B cell (primary cell): ENCODE measurements at regions of chr10 and their contacts with region 1.

Region 1: DNA sequence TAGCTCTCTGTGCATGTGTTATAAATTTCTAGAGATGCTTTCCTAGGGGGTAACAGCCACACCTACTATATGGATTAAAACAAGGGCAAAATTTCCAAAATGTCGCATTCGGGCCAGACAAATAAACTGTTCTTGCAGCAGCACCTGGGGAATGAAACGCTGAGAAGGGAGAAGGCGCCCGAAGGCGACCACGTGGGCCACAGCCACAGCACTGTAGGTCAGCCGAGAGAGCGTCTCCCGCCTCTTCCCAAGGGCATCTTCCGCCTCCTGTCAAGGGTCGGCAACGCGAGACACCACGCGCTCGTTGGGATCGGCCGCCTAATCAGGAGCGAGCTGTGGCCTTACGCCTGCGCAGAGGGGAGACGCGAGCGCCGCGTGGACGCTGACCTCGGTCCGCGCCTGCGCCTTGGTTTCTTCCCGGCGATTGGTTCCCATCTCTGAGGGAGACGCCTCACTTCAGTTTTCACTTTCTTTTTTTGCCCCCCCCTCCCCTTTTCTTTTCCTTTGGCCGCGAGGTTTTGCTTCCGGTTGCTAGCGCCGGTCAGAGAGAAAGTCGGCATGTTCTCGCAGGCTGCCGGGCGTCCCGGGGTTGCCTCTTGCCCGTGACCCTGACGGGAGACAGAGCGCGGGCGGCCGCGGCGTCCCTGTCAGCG is at the start of gene TASOR2:
- DNase-seq: peak; percentile 95
- ATAC-seq: peak; percentile 83
- H3K4me3 ChIP-seq: peak within 1 kb of the TSS; percentile 31 to 87 (median 75)
- H3K4me3 Mint-ChIP-seq: peak within 1 kb of the TSS; percentile 98
- H3K27ac ChIP-seq: peak within 1 kb of the TSS; percentile 78 to 97
- H3K27ac Mint-ChIP-seq: peak within 1 kb of the TSS; percentile 95
- H3K4me1 ChIP-seq: peaks cover 27 to 33% of the 10 kb centered on the region in 2 donors
- H3K4me1 Mint-ChIP-seq: peaks cover 33% of the 10 kb centered on the region
- H3K27me3 ChIP-seq: no peaks in the 10 kb centered on the region
- H3K27me3 Mint-ChIP-seq: peaks cover 4% of the 10 kb centered on the region
- CTCF ChIP-seq: no peak
- total RNA-seq, gene TASOR2: 68.6 and 69.6 TPM in 2 replicates

Region 2: GRCh38 chr10:5648584-5649457 is 35.6 kb before region 1 on chr10:
- CTCF ChIA-PET with region 1: no interaction called
- POLR2A ChIA-PET with region 1: no interaction called
- intact Hi-C with region 1: no loop called
- DNase-seq: no peak
- ATAC-seq: no peak
- H3K4me3 ChIP-seq: no peak overlapping the region
- H3K4me3 Mint-ChIP-seq: no peak overlapping the region
- H3K27ac ChIP-seq: no peak overlapping the region
- H3K27ac Mint-ChIP-seq: no peak overlapping the region
- H3K4me1 ChIP-seq: peaks cover 21 to 23% of the 10 kb centered on the region in 2 donors
- H3K4me1 Mint-ChIP-seq: peaks cover 26% of the 10 kb centered on the region
- H3K27me3 ChIP-seq: no peaks in the 10 kb centered on the region
- H3K27me3 Mint-ChIP-seq: peaks cover 3% of the 10 kb centered on the region
- CTCF ChIP-seq: no peak

Region 3: GRCh38 chr10:5666830-5667630 is 17.4 kb before region 1 on chr10:
- CTCF ChIA-PET with region 1: no interaction called
- POLR2A ChIA-PET with region 1: no interaction called
- intact Hi-C with region 1: loop called (anchors 1 kb)
- DNase-seq: no peak
- ATAC-seq: no peak
- H3K4me3 ChIP-seq: peak overlapping the region; percentile 38 to 80 (median 68)
- H3K4me3 Mint-ChIP-seq: peak overlapping the region; percentile 96
- H3K27ac ChIP-seq: no peak overlapping the region
- H3K27ac Mint-ChIP-seq: no peak overlapping the region
- H3K4me1 ChIP-seq: peaks cover 14 to 15% of the 10 kb centered on the region in 2 donors
- H3K4me1 Mint-ChIP-seq: peaks cover 20% of the 10 kb centered on the region
- H3K27me3 ChIP-seq: no peaks in the 10 kb centered on the region
- H3K27me3 Mint-ChIP-seq: peaks cover 4% of the 10 kb centered on the region
- CTCF ChIP-seq: no peak

Region 4: DNA sequence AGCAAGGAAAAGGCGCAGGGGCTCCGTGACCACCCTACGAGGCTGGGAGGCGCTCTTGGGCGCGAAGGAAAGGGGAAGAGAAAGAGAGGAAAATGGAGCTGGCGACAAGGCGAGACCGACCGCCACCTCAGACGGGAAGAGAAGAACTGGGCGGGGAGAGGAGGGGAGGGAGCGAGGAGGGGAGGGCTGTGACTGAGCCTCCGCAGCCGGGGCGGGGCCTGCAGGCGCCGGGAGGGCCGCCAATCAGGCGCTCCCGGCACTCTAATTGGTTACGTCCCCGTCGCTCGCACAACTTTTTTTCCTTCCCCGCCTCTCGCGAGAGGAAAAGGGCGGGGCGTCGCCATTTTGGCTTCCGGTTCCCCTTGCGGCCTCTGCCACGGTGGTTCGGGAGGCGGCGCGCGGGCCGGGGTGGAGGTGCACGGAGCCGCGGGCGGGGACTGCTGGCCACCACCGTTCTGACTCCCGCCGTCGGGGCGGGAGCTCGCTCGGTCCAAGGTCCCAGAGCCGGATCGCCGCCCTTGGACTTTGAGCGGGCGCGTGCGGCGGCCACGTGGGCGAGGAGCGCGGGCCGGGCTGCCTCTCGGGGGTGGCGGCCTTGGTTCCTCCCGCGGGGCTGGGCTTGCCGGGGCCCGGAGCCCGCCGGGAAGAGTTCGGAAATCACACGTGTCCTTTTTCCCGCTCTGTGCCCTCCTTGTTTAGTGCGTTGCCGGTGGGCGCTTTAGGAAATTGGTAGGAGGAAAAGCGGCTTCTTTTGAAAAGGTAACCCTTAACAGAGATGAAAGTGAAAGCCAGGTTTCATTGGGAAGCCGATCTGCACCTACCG is 129.1 kb after region 1 on chr10 and contains the start of gene GDI2:
- CTCF ChIA-PET with region 1: no interaction called
- POLR2A ChIA-PET with region 1: interaction called, 4 read pairs
- intact Hi-C with region 1: loop called (anchors 2 kb)
- DNase-seq: peak; percentile 98
- ATAC-seq: peak; percentile 87
- H3K4me3 ChIP-seq: peak within 1 kb of the TSS; percentile 77 to 98 (median 93)
- H3K4me3 Mint-ChIP-seq: peak within 1 kb of the TSS; percentile 91
- H3K27ac ChIP-seq: peak within 1 kb of the TSS; percentile 89 to 94
- H3K27ac Mint-ChIP-seq: peak within 1 kb of the TSS; percentile 96
- H3K4me1 ChIP-seq: peaks cover 66 to 73% of the 10 kb centered on the region in 2 donors
- H3K4me1 Mint-ChIP-seq: peaks cover 73% of the 10 kb centered on the region
- H3K27me3 ChIP-seq: no peaks in the 10 kb centered on the region
- H3K27me3 Mint-ChIP-seq: no peaks in the 10 kb centered on the region
- CTCF ChIP-seq: no peak
- total RNA-seq, gene GDI2: 187 and 189 TPM in 2 replicates

Region 5: DNA sequence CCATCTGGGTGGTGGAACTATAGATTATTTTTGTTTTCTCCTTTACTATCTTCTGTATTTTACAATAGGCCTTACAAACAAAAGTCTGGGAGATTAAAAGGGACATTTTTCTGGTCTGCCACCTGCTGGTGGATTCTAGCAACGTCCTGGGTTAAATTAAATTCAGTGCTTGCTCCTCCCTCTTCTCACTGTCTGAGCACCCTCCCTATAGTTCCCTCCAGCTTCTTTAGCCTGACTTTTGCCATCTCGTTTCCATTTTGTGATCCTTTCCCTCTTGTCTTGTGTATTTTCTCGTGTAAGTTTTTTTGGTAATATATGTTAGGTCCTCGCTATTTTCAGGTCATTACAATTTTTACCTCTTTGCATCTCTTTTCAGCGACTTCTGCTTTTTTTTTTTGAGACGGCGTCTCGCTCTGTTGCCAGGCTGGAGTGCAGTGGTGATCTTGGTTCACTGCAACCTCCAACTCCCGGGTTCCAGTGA is 189.1 kb after region 1 on chr10:
- CTCF ChIA-PET with region 1: no interaction called
- POLR2A ChIA-PET with region 1: no interaction called
- intact Hi-C with region 1: loop called (anchors 1 kb)
- DNase-seq: peak; percentile 90
- ATAC-seq: peak; percentile 88
- H3K4me3 ChIP-seq: peak overlapping the region; percentile 18 to 52 (median 41)
- H3K4me3 Mint-ChIP-seq: peak overlapping the region; percentile 89
- H3K27ac ChIP-seq: peak overlapping the region; percentile 70 to 76
- H3K27ac Mint-ChIP-seq: peak overlapping the region; percentile 93
- H3K4me1 ChIP-seq: peaks cover 12 to 19% of the 10 kb centered on the region in 2 donors
- H3K4me1 Mint-ChIP-seq: peaks cover 20% of the 10 kb centered on the region
- H3K27me3 ChIP-seq: no peaks in the 10 kb centered on the region
- H3K27me3 Mint-ChIP-seq: no peaks in the 10 kb centered on the region
- CTCF ChIP-seq: peak; percentile 85

Region 6: DNA sequence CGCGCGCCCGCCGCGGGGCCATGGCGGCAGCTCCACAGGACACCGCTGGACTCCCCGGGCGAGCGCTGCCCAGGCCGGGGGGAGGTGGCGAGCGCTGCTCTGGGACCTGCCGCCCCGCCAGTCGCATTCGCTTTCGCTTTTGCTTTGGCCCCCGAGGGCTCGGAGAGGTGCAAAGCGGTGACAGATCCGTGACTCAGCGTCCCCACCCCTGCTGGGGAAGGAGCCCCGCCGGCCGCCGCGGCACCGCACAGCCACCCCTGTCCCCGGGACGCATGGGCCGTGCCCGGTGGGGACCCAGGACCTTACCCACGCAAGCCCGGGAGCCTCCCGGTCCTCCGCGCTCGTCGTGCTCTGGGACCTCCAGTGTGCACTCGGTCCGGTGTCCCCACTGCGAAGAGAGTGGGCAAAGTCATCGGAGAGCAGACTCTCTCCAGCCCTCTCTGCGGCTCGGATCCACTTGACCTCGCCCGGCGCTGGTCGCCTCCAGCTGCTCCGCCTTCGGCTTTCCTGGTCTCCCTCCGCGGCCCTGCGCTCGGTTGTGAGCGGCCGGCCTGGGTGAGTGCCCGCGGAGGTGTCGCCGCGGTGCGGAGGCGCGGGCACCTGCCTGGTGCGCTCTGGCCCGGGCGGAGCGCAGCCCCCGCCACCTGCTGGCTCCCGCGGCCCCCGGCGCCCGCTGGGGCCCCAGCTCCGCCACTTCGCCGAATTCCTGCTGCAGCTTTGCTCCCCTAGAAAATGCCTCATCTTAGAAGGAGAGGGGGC is 293.2 kb after region 1 on chr10 and contains the start of gene IL15RA:
- CTCF ChIA-PET with region 1: no interaction called
- POLR2A ChIA-PET with region 1: no interaction called
- intact Hi-C with region 1: loop called (anchors 2 kb)
- DNase-seq: peak; percentile 88
- ATAC-seq: peak; percentile 77
- H3K4me3 ChIP-seq: peak within 1 kb of the TSS; percentile 74 to 96 (median 93)
- H3K4me3 Mint-ChIP-seq: peak within 1 kb of the TSS; percentile 90
- H3K27ac ChIP-seq: peak within 1 kb of the TSS; percentile 65 to 75
- H3K27ac Mint-ChIP-seq: peak within 1 kb of the TSS; percentile 95
- H3K4me1 ChIP-seq: peaks cover 8 to 27% of the 10 kb centered on the region in 2 donors
- H3K4me1 Mint-ChIP-seq: peaks cover 29% of the 10 kb centered on the region
- H3K27me3 ChIP-seq: peaks cover 0 to 3% (median 0%) of the 10 kb centered on the region in 4 experiments
- H3K27me3 Mint-ChIP-seq: no peaks in the 10 kb centered on the region
- CTCF ChIP-seq: peak; percentile 43
- total RNA-seq, gene IL15RA: 6.8 and 9.3 TPM in 2 replicates

Region 7: DNA sequence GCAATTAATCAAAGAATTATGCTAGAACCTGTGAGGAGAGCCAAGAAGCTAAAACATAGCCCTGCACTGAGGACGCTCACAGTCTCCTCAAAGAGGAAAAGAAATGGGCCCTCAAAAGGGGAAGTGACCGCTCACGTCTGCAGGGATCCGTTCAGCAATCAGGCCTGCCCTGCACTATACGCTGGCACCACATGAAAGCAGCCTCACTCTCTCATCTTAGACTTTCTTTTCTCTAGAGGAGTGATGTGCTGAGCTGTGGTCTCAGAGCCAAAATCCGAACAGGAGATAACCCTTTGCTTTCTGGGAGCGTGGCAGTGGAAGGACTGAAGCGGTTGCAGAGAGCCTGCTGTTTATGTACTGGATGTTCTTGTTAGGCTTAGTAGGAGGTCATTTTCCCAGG is 384.0 kb after region 1 on chr10:
- CTCF ChIA-PET with region 1: no interaction called
- POLR2A ChIA-PET with region 1: no interaction called
- intact Hi-C with region 1: no loop called
- DNase-seq: peak; percentile 79
- ATAC-seq: peak; percentile 69
- H3K4me3 ChIP-seq: peak overlapping the region in 2 of 5 experiments; percentile 19 to 40
- H3K4me3 Mint-ChIP-seq: peak overlapping the region; percentile 85
- H3K27ac ChIP-seq: peak overlapping the region; percentile 80 to 91
- H3K27ac Mint-ChIP-seq: peak overlapping the region; percentile 99
- H3K4me1 ChIP-seq: peaks cover 59 to 64% of the 10 kb centered on the region in 2 donors
- H3K4me1 Mint-ChIP-seq: peaks cover 83% of the 10 kb centered on the region
- H3K27me3 ChIP-seq: no peaks in the 10 kb centered on the region
- H3K27me3 Mint-ChIP-seq: no peaks in the 10 kb centered on the region
- CTCF ChIP-seq: no peak

Region 8: DNA sequence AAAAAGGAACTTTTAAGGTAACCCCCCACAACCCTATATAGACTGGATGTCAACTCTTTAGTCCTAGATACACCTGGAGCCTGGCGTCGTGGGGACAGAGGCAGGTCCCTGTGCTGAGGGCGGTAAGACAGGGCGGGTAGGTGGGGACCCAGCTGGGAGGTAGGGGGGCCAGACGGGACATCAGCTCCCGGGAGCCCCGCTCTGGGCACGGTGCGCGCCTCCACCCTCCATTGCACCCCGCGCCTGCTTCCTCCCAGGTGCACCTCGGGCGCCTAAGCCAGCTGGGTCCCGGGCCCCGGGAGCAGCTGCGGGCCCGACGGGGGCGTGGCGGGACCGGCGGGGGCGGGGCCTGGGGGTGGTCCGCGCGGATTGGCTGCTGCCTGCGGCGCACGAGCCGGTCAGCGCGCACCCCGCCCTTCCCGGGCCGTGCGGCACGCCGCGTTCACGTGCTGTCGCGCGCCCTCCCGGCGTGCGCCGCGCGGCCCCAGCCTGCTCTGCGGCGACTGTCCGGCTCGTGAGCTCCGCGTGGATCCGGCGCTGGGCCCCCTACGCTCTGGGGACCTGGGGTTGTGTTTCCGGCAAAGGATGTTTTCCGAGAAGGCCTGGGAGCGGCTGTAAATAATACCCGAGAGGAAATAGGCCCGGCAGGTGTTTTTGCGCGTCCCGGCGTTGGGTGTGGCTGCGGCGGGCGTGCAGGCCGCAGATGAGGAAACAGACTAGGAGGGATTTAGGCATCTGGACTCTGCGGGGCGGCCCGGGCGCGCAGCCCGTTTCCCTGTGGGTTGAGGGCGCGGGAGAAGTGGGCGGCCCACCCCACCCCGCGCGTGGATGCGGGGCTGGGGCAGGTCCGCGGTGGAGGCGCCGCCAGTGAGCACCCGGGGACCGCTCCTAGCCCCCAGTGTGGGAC is 479.2 kb after region 1 on chr10:
- CTCF ChIA-PET with region 1: no interaction called
- POLR2A ChIA-PET with region 1: no interaction called
- intact Hi-C with region 1: loop called (anchors 10 kb)
- DNase-seq: peak; percentile 95
- ATAC-seq: peak; percentile 96
- H3K4me3 ChIP-seq: peak overlapping the region in 4 of 5 experiments; percentile 69 to 84 (median 72)
- H3K4me3 Mint-ChIP-seq: peak overlapping the region; percentile 97
- H3K27ac ChIP-seq: peak overlapping the region; percentile 89 to 96
- H3K27ac Mint-ChIP-seq: peak overlapping the region; percentile 98
- H3K4me1 ChIP-seq: peaks cover 16 to 19% of the 10 kb centered on the region in 2 donors
- H3K4me1 Mint-ChIP-seq: peaks cover 39% of the 10 kb centered on the region
- H3K27me3 ChIP-seq: no peaks in the 10 kb centered on the region
- H3K27me3 Mint-ChIP-seq: no peaks in the 10 kb centered on the region
- CTCF ChIP-seq: no peak

Region 9: DNA sequence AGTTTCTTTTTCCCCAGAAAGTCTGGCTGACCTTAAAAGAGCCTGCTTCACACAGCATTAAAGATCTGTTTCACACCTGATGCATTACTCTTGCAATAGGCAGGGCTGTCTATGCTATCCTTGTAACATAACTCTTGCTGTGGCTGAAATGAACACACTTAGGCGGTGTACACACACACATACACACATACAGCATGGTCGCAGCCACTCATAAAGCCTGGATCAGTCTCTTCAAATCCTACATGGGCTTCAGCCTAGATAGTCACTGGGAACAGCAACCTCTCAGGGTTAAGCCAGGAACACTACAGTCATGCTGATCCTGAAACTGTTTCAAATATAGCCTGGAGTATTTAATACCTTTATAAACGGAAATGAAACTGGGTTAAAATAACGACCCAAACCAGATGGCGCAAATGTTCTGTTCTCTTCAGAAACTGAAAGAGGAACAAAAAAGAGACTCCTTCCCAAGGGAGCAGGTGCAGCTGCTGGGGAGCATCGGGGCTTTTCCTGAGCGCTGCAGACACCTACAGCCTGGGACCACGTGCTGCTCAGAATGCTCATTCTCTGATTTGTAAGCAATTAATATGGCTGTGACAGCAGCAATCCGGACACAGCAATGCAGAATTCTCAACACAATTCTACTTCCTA is 1787.4 kb after region 1 on chr10:
- CTCF ChIA-PET with region 1: no interaction called
- POLR2A ChIA-PET with region 1: no interaction called
- intact Hi-C with region 1: loop called (anchors 10 kb)
- DNase-seq: peak; percentile 94
- ATAC-seq: peak; percentile 93
- H3K4me3 ChIP-seq: peak overlapping the region in 4 of 5 experiments; percentile 6 to 57 (median 30)
- H3K4me3 Mint-ChIP-seq: peak overlapping the region; percentile 80
- H3K27ac ChIP-seq: peak overlapping the region; percentile 71 to 78
- H3K27ac Mint-ChIP-seq: peak overlapping the region; percentile 83
- H3K4me1 ChIP-seq: peaks cover 70% of the 10 kb centered on the region in 2 donors
- H3K4me1 Mint-ChIP-seq: peaks cover 69% of the 10 kb centered on the region
- H3K27me3 ChIP-seq: no peaks in the 10 kb centered on the region
- H3K27me3 Mint-ChIP-seq: no peaks in the 10 kb centered on the region
- CTCF ChIP-seq: no peak